ENCODE measurements at regions of chr14 and their contacts with region 1.

Region 1: DNA sequence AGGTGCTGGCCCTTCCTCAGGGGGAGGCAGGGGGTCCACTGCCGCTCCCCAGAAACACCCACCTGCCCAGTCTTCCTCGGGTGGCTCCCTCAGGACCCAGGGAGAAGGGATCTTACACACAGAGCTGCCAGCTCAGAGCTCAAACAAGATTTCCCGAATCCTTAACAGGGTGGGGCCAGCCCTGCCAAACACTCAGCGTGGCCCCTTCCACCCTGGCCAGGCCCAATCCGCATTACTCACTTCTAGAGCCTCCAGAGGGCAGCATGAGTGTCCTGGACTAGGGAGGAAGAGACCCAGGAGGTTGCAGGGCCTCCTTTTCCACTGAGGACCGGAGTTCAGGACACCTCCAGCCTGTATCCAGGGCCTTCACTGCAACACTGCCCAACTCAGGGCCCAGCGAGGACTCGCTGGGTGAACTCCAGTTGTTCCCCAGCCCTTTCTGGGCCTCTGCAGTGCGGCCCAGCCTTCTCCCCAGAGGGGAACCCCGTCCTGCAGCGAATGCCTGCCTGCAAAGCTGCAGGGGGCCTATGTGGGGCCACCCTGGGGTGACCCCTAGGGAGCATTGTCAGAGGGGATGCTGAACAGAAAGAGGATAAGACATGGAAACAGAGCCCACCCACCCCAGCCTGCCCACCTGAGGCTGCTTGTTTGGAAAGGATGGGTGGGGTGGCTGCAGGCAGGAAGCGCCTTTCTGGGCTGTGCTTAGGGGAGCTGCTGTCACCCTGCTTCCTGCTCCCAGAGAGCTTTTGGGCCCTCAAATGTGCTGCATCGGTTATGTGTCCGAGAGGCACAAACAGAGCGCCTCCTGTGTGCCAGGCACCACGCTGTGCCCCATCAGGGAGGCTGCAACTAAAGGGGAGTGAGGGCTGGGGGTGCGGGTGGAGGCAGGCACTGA is 43.8 kb downstream of the CCNK start:
- DNase-seq: no peak

Region 2: DNA sequence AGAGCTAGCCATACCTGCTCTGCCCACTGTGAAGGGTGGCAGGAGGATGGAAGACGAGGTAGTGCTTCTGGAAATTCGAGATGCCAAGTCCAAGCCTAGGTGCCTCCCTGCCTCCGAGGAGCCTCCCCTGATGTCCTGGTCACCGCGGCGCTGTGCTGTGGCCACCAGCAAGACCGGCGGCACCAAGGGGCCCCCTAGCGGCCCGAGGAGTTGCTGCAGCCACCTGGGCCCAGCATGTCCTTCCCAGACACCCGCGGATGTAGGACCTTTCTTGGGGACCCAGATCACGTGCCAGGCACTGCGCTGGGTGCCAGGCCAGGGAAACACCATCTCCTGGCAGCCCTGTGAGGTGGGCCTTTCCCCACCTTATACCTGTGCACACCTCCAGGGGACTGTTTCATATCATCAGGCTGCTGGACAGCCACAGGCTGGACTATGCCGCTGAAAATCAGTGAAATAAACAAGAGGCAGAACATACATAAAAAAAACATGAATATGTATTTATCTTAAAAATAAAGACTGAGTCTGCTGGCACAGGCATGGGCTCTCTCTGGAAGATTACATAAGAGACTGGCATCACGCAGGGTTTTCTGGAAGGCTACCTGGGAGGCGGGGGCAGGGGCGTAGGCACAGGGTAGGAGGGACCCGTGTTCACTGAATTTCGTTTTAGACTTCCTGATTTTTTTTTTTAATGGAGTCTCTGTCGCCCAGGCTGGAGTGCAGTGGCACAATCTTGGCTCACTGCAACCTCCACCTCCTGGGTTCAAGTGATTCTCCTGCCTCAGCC is 104.0 kb after region 1 on chr14:
- in situ Hi-C with region 1: loop called (anchors 10 kb)
- DNase-seq: peak; percentile 77